Right cardiac atrium (tissue), 5 donors: ENCODE measurements at regions of chr7 and their contacts with region 1.

Region 1: DNA sequence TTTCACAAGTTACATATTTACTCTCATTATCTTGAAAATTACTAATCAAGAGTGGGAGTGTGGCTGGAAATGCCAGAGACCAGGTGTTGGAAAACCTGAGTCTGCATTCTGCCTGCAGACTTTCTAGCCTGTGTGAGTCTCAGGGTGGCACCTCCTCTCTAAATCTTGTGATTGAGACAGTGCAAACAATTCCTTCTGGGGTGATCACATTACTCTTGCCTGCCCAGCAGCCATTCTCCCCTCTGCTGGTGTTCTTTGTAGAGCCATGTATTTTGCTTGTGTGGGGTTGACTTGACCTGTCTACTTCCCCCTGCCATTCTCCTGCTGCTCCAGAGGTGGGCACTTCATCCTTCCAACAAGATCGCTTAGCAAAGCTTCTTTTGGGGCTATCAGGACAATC is 101.1 kb downstream of the RAPGEF5 start:
- DNase-seq: no peak
- ATAC-seq: peak in 1 of 2 donors; percentile 61
- H3K4me3 ChIP-seq: no peak overlapping the region
- H3K27ac ChIP-seq: no peak overlapping the region
- H3K4me1 ChIP-seq: peaks cover 3% of the 10 kb centered on the region
- H3K27me3 ChIP-seq: no peaks in the 10 kb centered on the region

Region 2: DNA sequence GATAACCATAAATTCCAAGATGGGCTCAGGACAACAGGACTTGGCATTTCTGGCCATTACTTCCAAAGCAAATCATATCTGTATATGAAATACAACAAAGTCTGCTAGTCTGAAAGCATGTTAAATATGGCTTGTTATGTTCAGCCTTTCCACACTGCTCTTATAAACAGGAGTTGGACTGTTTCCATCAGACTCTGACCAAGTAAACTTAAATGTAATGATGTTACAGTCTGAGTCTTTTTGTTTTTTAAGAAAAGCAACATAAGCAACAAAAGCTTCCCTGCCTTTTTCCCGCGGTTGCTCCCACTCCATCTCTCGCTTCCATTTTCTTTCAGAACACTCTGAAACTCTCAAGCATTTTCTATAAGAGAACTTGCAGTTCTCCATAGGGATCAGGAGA is 302.1 kb before region 1 on chr7:
- intact Hi-C with region 1: no loop called
- DNase-seq: no peak
- ATAC-seq: no peak
- H3K4me3 ChIP-seq: no peak overlapping the region
- H3K27ac ChIP-seq: no peak overlapping the region
- H3K4me1 ChIP-seq: no peaks in the 10 kb centered on the region
- H3K27me3 ChIP-seq: no peaks in the 10 kb centered on the region

Region 3: DNA sequence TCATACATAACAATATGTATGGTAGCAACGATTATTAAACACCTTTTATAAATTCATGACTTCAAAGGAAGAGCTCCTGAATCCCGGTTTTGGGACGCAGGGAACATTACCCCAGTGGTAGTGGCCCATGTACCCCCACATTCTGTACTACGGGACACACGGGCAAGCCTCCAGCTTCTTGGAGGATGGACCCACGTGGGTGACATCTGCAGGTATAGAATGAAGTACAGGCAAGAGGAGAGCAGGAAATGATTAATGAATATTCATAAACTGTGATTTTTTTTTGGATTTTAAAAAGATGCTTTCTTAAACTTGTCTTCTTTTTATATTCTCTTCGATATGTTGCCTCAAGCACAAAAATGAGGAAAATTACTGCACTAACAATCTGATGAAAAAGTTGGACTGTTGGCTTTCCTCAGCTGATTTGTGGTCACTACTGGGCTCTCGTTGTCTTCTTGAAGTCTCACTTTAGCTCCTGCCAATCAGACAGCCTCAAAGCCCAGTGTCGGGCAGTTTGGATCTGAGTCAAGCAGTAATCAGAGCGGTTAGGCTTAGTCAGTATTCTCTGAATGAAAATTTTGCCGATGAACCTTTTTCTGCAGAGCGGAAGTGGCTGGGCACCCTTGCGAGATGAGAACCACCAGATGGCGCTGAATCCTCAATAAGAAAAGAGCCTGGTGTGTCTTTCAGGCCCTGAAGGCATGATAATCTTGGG is 152.4 kb before region 1 on chr7:
- intact Hi-C with region 1: loop called in 1 of 4 experiments (anchors 10 kb)
- DNase-seq: peak; percentile 56 to 77 (median 69)
- ATAC-seq: peak; percentile 74 to 78
- H3K4me3 ChIP-seq: no peak overlapping the region
- H3K27ac ChIP-seq: no peak overlapping the region
- H3K4me1 ChIP-seq: no peaks in the 10 kb centered on the region
- H3K27me3 ChIP-seq: no peaks in the 10 kb centered on the region

Region 4: GRCh38 chr7:22110227-22110839 is 145.5 kb before region 1 on chr7:
- intact Hi-C with region 1: loop called in 2 of 4 experiments (anchors 5 to 10 kb)
- DNase-seq: peak in 2 of 3 donors; percentile 56 to 70
- ATAC-seq: peak; percentile 65 to 74
- H3K4me3 ChIP-seq: no peak overlapping the region
- H3K27ac ChIP-seq: no peak overlapping the region
- H3K4me1 ChIP-seq: peaks cover 4% of the 10 kb centered on the region
- H3K27me3 ChIP-seq: no peaks in the 10 kb centered on the region

Region 5: GRCh38 chr7:22156205-22156604 is 99.6 kb before region 1 on chr7:
- intact Hi-C with region 1: loop called in 1 of 4 experiments (anchors 10 kb)
- DNase-seq: no peak
- ATAC-seq: peak in 1 of 2 donors; percentile 80
- H3K4me3 ChIP-seq: no peak overlapping the region
- H3K27ac ChIP-seq: no peak overlapping the region
- H3K4me1 ChIP-seq: no peaks in the 10 kb centered on the region
- H3K27me3 ChIP-seq: no peaks in the 10 kb centered on the region